Endothelial cell of umbilical vein (primary cell): ENCODE measurements at regions of chr6 and their contacts with region 1.

Region 1: DNA sequence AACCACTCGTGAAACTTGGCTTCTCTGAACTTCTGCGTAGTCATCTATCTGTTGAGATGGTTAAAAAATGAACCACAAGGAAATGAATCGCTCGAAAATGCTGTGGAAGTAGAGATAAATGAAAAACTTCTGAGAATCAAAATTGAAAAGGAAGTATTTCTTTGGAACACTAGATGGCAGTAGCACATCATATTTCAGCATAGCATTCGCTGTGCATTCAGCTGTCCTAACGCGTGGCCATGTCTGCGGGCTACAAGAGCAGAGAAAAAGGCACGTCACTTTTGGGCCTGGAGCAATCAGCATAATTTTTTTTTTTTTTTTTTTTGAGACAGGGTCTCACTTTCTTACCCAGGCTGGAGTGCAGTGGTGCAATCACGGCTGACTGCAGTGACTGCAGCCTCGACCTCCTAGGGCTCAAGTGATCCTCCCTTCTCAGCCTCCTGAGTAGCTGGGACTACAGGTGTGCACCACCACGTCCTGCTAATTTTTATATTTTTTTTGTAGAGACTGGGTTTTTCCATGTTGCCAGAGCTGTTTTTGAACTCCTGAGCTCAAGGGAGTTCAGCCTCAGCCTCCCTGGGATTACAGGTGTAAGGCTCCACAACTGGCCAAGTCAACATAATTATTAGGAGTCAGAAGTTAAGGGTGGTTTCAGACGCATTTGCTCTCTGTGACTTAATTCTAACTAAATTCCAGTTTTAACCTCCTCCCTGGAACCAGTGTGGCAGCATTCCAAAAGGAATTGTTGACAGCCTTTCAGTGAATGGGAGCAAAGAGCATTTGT is 8.8 kb upstream of the PERP start:
- DNase-seq: peak; percentile 71
- H3K4me3 ChIP-seq: no peak overlapping the region
- H3K27ac ChIP-seq: no peak overlapping the region
- H3K4me1 ChIP-seq: no peaks in the 10 kb centered on the region
- H3K27me3 ChIP-seq: peaks cover 5 to 8% of the 10 kb centered on the region in 2 experiments
- CTCF ChIP-seq: peak; percentile 42 to 44
- POLR2A ChIP-seq: no peak

Region 2: GRCh38 chr6:138145402-138145801 is 29.3 kb after region 1 on chr6:
- CTCF ChIA-PET with region 1: no interaction called
- POLR2A ChIA-PET with region 1: no interaction called
- dilution Hi-C with region 1: no loop called
- intact Hi-C with region 1: no loop called
- DNase-seq: no peak
- H3K4me3 ChIP-seq: no peak overlapping the region
- H3K27ac ChIP-seq: no peak overlapping the region
- H3K4me1 ChIP-seq: no peaks in the 10 kb centered on the region
- H3K27me3 ChIP-seq: peaks cover 3 to 6% of the 10 kb centered on the region in 2 experiments
- CTCF ChIP-seq: no peak
- POLR2A ChIP-seq: no peak

Region 3: DNA sequence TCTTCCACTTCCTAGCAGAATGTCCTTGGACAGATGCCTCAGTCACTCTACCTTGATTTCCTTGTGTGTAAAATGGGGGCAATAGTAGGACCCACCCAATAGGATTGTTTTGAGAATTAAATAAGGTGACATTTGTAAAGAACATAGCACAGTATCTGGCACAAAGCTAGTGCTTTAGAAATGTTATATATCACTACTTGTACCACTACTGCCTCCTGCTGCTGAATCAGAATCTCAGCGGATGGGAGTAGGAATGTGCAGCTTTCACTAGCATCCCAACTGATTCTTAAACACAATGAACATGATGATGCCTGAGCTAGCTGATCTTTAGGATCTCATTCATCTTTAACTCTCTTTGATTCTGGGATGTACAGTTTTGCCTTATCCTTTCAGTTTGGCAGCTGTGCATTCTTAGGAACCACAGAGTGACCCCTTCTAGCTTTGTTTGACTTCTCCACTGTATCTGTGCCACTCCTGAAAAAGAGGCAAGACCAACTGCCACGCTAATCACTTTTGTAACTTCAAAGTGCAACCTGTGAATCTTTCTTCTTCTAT is 95.0 kb after region 1 on chr6:
- CTCF ChIA-PET with region 1: interaction called, 14 read pairs
- POLR2A ChIA-PET with region 1: no interaction called
- dilution Hi-C with region 1: no loop called
- intact Hi-C with region 1: no loop called
- DNase-seq: no peak
- H3K4me3 ChIP-seq: no peak overlapping the region
- H3K27ac ChIP-seq: no peak overlapping the region
- H3K4me1 ChIP-seq: no peaks in the 10 kb centered on the region
- H3K27me3 ChIP-seq: no peaks in the 10 kb centered on the region
- CTCF ChIP-seq: no peak
- POLR2A ChIP-seq: no peak

Region 4: GRCh38 chr6:138287144-138287955 is 171.3 kb after region 1 on chr6:
- CTCF ChIA-PET with region 1: interaction called, 33 read pairs
- POLR2A ChIA-PET with region 1: no interaction called
- dilution Hi-C with region 1: no loop called
- intact Hi-C with region 1: loop called (anchors 1 kb)
- DNase-seq: peak; percentile 29
- H3K4me3 ChIP-seq: no peak overlapping the region
- H3K27ac ChIP-seq: no peak overlapping the region
- H3K4me1 ChIP-seq: peaks cover 3% of the 10 kb centered on the region
- H3K27me3 ChIP-seq: no peaks in the 10 kb centered on the region
- CTCF ChIP-seq: peak; percentile 43 to 67
- POLR2A ChIP-seq: no peak

Region 5: DNA sequence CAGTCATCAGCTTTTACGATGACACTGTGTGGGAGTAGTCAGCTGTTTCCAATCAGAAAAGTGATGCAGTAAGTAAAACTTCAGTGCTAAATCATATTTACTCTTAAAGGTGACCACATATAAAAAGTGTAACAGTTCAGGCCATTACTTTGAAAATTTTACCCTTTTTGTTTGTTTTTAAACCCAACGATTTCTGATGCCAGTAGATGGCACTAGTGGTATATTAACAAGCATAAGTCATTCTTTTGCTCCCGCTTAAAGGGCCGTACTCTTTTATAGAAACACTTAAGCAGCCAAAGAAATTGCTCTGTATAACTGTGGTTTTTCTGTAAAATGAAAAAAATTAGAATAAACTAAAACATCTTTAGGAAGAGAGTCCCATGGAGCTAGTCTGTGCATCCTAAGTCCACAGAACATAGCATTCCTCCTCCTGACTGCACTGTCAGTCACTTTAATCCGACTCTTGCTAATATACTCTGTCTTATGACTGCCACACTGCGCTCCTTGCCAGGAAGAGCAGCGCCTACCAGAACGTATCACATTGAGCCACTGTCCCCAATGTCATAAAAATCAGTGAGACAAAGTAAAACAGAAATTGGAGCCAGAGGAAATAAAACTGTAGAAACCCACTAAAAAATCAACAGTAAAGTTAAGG is 313.0 kb after region 1 on chr6:
- CTCF ChIA-PET with region 1: interaction called, 4 read pairs
- POLR2A ChIA-PET with region 1: no interaction called
- dilution Hi-C with region 1: no loop called
- intact Hi-C with region 1: loop called (anchors 1 kb)
- DNase-seq: peak; percentile 62
- H3K4me3 ChIP-seq: no peak overlapping the region
- H3K27ac ChIP-seq: no peak overlapping the region
- H3K4me1 ChIP-seq: no peaks in the 10 kb centered on the region
- H3K27me3 ChIP-seq: no peaks in the 10 kb centered on the region
- CTCF ChIP-seq: peak; percentile 36 to 41
- POLR2A ChIP-seq: no peak

Region 6: GRCh38 chr6:138517635-138518034 is 401.6 kb after region 1 on chr6:
- CTCF ChIA-PET with region 1: interaction called, 11 read pairs
- POLR2A ChIA-PET with region 1: no interaction called
- dilution Hi-C with region 1: no loop called
- intact Hi-C with region 1: loop called (anchors 2 kb)
- DNase-seq: peak; percentile 35
- H3K4me3 ChIP-seq: no peak overlapping the region
- H3K27ac ChIP-seq: no peak overlapping the region
- H3K4me1 ChIP-seq: peaks cover 12% of the 10 kb centered on the region
- H3K27me3 ChIP-seq: no peaks in the 10 kb centered on the region
- CTCF ChIP-seq: peak; percentile 67 to 77
- POLR2A ChIP-seq: no peak